Endothelial cell of umbilical vein (primary cell): ENCODE measurements at regions of chr7 and their contacts with region 1.

Region 1: DNA sequence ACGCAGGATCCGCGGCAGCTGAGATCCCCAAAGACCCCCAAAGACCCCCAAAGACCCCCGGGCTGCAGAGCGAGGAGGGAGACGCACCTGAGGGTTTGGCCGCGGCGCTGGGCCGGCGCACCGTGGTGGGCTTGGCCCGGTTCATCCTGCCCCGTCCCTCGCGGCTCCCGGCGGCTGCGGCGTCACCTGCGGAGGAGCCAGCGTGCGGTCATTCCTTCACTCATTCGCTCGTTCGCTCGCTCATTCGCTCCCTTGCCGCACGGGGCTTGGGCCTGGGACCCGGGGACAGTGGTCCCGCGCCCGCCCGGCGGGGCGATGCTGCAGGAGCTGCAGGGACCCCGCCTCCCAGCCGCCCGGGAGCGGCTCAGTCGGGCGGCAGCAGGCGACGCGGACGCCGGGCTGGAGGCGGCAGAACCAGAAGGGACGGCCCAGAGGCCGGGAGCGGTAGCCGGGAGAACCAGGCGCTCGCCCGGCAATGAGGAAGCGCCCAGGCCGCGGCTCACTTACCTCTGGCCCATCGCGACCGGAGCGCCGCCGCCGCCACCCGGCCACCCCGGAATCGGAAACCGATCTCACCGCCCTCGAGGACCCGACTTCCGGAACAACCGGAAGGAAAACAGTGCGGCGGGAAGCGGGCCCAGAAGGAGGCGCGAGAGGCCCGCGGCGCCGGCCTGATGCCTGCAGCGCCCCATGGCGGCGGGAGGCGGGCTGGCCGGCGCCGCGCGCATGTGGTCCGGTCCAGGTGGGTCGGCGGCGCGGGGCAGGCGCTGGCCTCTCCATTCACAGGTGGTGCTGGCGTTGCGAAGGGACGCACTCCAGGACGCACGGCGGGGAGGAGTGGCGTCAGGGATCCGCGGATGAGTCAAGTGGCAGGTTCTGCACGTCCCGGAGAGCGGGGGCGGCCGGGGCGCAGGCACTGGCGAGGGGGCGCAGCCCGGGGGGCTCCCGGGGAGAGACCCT is at the start of gene INTS1:
- DNase-seq: peak; percentile 85
- H3K4me3 ChIP-seq: peak within 1 kb of the TSS; percentile 51 to 98 (median 56)
- H3K27ac ChIP-seq: peak within 1 kb of the TSS; percentile 49
- H3K4me1 ChIP-seq: peaks cover 5% of the 10 kb centered on the region
- H3K27me3 ChIP-seq: no peaks in the 10 kb centered on the region
- CTCF ChIP-seq: peak; percentile 83 to 97
- POLR2A ChIP-seq: peak; percentile 81
- total RNA-seq, gene INTS1: 114 and 116 TPM in 2 replicates

Region 2: DNA sequence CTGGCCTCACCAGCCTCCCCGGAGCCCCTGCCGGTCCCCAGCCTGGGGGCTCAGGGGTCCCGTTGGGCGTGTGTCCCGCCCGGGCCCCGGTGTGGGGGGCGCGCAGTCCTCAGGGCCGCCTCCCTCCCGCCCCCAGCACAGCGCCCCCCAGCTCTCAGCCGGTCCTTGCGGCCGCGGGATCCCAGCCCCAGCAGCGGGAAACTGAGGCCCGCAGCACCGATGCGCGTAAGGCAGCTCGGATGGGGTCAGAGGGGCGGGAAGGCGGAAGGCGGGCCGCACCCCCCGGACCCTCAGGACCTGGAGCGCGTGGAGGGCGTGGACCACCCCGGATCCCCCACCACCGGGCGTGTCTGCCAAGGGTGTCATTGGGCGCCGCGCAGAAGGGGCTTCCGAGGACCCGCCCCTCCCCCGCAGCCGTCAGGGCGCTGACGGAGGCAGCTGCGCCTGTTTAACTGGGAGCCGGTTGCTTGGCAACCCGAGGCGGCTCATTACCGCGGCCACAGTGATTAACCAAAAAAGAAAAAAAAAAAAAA is 256.5 kb before region 1 on chr7:
- CTCF ChIA-PET with region 1: no interaction called
- POLR2A ChIA-PET with region 1: no interaction called
- dilution Hi-C with region 1: no loop called
- intact Hi-C with region 1: no loop called
- DNase-seq: no peak
- H3K4me3 ChIP-seq: no peak overlapping the region
- H3K27ac ChIP-seq: no peak overlapping the region
- H3K4me1 ChIP-seq: no peaks in the 10 kb centered on the region
- H3K27me3 ChIP-seq: peaks cover 66 to 78% of the 10 kb centered on the region in 2 experiments
- CTCF ChIP-seq: no peak
- POLR2A ChIP-seq: no peak

Region 3: DNA sequence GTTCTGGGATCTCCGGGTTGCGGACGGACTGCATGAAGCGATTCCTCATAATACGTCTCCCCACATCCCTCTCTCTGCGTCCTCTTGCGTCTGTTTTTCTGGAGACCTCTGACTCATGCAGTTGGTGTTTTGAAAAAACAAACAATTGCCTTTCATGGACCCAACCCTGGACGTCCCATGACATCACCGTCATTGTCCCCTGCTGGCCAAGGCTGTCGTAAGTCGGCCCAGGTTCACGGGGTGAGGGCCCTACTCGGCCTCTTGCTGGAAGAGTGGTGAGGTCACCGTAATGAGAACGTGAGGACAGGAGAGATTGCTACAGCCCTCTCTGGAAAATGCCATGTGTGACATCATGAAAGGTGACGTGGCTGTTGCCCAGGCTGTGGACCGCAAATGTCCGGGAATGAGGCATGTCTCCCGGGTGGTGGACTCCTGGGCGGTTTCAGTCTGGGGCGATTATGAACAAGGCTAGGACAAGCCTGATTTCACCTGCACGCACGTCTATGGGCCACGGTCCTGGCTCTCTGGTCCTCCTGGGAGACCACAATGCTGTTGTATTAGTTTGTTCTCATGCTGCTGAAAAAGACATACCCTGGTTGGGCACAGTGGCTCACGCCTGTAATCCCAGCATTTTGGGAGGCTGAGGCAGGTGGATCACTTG is 16.6 kb after region 1 on chr7:
- CTCF ChIA-PET with region 1: no interaction called
- POLR2A ChIA-PET with region 1: no interaction called
- dilution Hi-C with region 1: no loop called
- intact Hi-C with region 1: loop called (anchors 1 kb)
- DNase-seq: peak; percentile 85
- H3K4me3 ChIP-seq: no peak overlapping the region
- H3K27ac ChIP-seq: peak overlapping the region; percentile 87
- H3K4me1 ChIP-seq: peaks cover 9% of the 10 kb centered on the region
- H3K27me3 ChIP-seq: peaks cover 2 to 4% of the 10 kb centered on the region in 2 experiments
- CTCF ChIP-seq: no peak
- POLR2A ChIP-seq: no peak

Region 4: DNA sequence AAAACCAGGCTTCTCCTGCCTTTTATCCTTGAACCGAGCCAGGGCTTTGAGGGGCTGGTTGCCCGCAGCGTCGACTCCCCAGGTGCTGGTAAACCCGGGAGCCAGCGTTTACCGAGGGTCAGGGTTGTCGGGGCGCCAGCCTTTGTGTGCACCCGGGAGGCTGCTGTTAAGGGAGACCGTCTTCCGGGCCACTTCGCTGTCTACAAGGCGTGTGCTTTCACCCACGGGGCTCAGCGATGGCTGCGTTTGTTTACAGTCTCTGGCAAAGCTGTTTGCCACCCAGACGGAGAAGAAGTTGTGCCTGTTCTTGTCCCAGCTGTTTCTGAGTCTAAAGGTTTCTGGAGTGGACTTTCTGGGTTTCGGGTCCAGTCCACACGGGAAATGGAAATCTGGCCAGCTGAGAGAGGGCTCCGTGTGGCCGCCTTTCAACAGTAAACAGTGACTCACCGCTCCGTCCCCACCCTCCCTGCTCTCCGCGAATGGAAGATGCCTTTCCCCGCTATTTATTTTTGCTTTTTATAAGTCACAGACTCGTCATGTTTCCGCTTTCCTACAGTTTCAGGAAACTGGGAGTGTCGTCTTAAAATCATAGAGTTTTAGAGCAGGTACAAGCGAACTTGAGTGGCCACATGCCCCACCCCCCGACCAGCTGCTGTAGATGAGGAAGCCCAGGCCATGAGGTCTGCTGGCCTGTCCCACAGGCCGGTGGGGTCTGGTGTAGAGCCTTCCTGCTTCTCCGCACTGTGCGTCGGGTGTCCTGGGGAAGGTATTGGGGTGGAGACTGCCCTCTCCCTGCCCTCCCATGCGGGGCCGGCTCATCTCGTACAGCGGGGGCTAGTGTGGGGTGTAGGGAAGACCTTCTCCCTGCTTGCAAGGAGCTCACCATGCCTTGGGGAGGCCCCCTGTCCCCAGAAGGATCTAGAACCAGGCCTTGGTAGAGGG is 28.7 kb after region 1 on chr7:
- CTCF ChIA-PET with region 1: no interaction called
- POLR2A ChIA-PET with region 1: no interaction called
- dilution Hi-C with region 1: no loop called
- intact Hi-C with region 1: loop called (anchors 1 kb)
- DNase-seq: peak; percentile 97
- H3K4me3 ChIP-seq: peak overlapping the region; percentile 5 to 70 (median 54)
- H3K27ac ChIP-seq: peak overlapping the region; percentile 97
- H3K4me1 ChIP-seq: peaks cover 49% of the 10 kb centered on the region
- H3K27me3 ChIP-seq: peaks cover 0 to under 1% of the 10 kb centered on the region in 2 experiments
- CTCF ChIP-seq: no peak
- POLR2A ChIP-seq: peak; percentile 50

Region 5: DNA sequence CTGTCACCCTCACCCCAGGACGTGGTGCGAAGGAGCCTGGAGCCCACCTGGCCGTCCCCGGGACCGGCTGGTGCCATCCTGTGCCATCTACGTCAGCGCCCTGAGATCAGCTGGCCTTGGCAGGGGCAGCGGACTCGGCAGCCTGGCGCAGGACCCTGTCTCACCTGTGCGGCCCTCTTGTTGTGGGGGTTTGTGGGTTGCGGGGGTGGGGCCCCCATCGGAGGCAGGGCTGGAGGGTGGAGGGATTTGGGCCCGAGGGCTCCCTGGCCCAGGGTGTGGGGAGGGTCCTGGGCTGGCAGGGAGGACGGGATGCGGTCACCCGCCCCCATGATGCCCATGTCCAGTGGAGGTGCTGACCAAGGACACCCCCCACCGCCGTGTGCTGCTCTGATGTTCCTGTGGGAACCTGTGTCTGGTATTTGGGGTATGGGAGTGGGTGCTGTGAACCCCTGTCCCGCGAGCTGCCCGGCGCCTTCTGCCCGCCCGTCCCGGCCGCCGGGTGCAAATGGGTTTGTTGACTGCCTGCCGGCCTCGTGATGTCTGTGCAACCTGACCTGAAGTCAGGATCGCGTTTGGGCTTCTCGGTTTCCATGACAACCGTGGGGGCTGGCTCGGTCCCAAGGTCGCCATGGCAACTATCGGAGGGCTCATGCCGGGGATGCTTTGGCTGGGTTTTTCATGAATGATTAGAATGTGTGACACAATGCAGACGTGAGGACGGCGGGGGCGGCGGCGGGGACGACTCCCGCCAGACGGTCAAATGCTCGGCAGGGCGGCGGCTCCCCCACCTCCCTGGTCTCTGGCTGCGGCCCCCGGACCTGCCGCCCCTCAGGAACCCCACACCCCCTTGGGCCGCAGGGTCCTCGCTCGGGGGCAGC is 33.7 kb after region 1 on chr7:
- CTCF ChIA-PET with region 1: no interaction called
- POLR2A ChIA-PET with region 1: no interaction called
- dilution Hi-C with region 1: no loop called
- intact Hi-C with region 1: loop called (anchors 1 kb)
- DNase-seq: peak; percentile 100
- H3K4me3 ChIP-seq: peak overlapping the region in 2 of 3 experiments; percentile 25 to 45
- H3K27ac ChIP-seq: peak overlapping the region; percentile 97
- H3K4me1 ChIP-seq: peaks cover 50% of the 10 kb centered on the region
- H3K27me3 ChIP-seq: no peaks in the 10 kb centered on the region
- CTCF ChIP-seq: no peak
- POLR2A ChIP-seq: no peak

Region 6: GRCh38 chr7:2232766-2233520 is 728.8 kb after region 1 on chr7 and contains the start of gene MAD1L1:
- CTCF ChIA-PET with region 1: no interaction called
- POLR2A ChIA-PET with region 1: no interaction called
- dilution Hi-C with region 1: no loop called
- intact Hi-C with region 1: no loop called
- DNase-seq: peak; percentile 92
- H3K4me3 ChIP-seq: peak within 1 kb of the TSS; percentile 71 to 85 (median 79)
- H3K27ac ChIP-seq: peak within 1 kb of the TSS; percentile 53
- H3K4me1 ChIP-seq: peaks cover 22% of the 10 kb centered on the region
- H3K27me3 ChIP-seq: no peaks in the 10 kb centered on the region
- CTCF ChIP-seq: no peak
- POLR2A ChIP-seq: peak; percentile 68
- total RNA-seq, gene MAD1L1: 42.3 and 46.7 TPM in 2 replicates